ENCODE measurements at regions of chr1 and their contacts with region 1.

Region 1: GRCh38 chr1:54121482-54122134 is 31.2 kb downstream of the CDCP2 start:
- DNase-seq: peak; percentile 51 to 73
- ATAC-seq: peak; percentile 33 to 72
- H3K4me3 ChIP-seq: peak overlapping the region; percentile 35 to 49 (median 42)
- H3K27ac ChIP-seq: no peak overlapping the region
- H3K4me1 ChIP-seq: peaks cover 10 to 17% of the 10 kb centered on the region in 2 donors
- H3K27me3 ChIP-seq: no peaks in the 10 kb centered on the region
- CTCF ChIP-seq: peak; percentile 67 to 88 (median 79)
- POLR2A ChIP-seq: no peak

Region 2: DNA sequence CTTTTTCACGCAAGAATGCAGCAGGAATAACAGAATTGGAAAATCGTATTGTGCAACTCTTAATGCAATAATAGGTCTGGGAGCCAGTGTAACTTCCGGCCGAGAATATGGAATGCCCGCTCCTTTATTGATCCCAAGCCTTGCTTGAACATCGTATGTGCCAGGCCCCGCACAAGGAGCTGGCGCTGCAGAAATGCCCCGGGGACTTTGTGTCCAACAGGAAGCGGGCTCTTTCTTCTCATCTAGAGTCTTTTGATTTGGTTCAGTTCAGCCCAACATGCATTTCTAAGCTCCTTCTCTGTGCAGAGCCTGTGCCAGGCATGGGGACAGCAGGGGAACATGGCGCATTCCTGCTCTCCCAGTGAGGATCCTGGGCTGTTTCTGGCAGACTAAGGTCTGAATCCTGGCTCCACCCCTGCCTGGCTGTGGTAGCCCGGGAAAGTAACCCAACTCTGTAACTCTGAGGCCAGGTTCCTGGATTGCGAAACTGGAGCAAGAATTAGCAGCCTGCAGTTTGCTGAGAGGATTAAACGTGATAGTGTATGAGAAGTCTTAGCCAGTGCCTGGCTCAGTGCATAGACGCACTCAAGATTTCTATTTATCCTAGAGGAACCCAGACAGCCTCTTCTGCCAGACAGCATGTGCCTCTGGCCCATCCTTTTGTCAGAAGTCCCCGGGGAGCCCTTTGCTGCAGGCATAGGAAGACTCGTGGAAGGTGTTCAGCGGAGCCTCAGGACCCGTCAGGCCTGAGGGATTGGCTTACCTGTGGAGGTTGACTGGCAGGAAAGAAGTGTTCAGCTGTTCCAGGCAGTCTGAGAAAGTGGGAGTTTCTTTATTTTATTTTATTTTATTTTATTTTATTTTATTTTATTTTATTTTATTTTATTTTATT is 32.2 kb after region 1 on chr1:
- in situ Hi-C with region 1: no loop called
- intact Hi-C with region 1: loop called (anchors 1 kb)
- DNase-seq: peak; percentile 79 to 88
- ATAC-seq: peak; percentile 100
- H3K4me3 ChIP-seq: no peak overlapping the region
- H3K27ac ChIP-seq: peak overlapping the region; percentile 60 to 73 (median 65)
- H3K4me1 ChIP-seq: peaks cover 8 to 15% of the 10 kb centered on the region in 2 donors
- H3K27me3 ChIP-seq: no peaks in the 10 kb centered on the region
- CTCF ChIP-seq: no peak
- POLR2A ChIP-seq: no peak

Region 3: GRCh38 chr1:54199765-54200518 is 78.3 kb after region 1 on chr1 and contains the starts of genes CYB5RL and MRPL37:
- in situ Hi-C with region 1: no loop called
- intact Hi-C with region 1: loop called (anchors 1 kb)
- DNase-seq: peak; percentile 94 to 95
- ATAC-seq: peak; percentile 99
- H3K4me3 ChIP-seq: peak within 1 kb of the TSS; percentile 94 to 100 (median 97)
- H3K27ac ChIP-seq: peak within 1 kb of the TSS; percentile 93 to 97 (median 96)
- H3K4me1 ChIP-seq: peaks cover 18 to 22% of the 10 kb centered on the region in 2 donors
- H3K27me3 ChIP-seq: no peaks in the 10 kb centered on the region
- CTCF ChIP-seq: no peak
- POLR2A ChIP-seq: peak; percentile 65 to 78
- total RNA-seq, gene CYB5RL: 1.8 to 5.8 (median 3.4) TPM
- total RNA-seq, gene MRPL37: 91.6 to 141 (median 121) TPM

Region 4: GRCh38 chr1:54273092-54273794 is 151.6 kb after region 1 on chr1:
- in situ Hi-C with region 1: no loop called
- intact Hi-C with region 1: loop called (anchors 5 kb)
- DNase-seq: peak; percentile 84 to 91
- ATAC-seq: peak; percentile 82 to 84
- H3K4me3 ChIP-seq: peak overlapping the region; percentile 30 to 43 (median 36)
- H3K27ac ChIP-seq: peak overlapping the region; percentile 89 to 92 (median 92)
- H3K4me1 ChIP-seq: peaks cover 74 to 80% of the 10 kb centered on the region in 2 donors
- H3K27me3 ChIP-seq: no peaks in the 10 kb centered on the region
- CTCF ChIP-seq: peak; percentile 59 to 82 (median 67)
- POLR2A ChIP-seq: peak; percentile 21

Region 5: DNA sequence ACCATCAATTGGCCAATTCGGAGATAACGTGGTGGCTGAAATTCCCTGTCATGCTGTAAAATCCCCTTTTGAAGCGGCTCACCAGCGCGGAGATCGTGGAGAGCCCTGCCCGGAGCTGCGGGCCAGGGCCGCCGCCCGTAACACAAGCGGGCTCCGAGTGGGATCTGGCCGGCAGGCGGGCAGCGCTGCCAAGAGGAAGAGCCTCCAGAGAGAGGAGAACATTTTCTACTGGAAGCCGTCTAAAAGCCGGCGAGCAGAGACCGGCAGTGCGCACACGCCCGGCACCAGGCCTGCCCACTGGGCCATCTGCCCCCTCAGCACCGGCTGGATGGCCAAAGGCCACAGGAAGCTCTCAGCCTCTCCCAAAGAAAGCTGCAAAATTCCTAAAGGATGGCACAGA is 269.0 kb after region 1 on chr1:
- in situ Hi-C with region 1: no loop called
- intact Hi-C with region 1: no loop called
- DNase-seq: peak in 1 of 2 donors; percentile 63
- ATAC-seq: peak; percentile 46 to 59
- H3K4me3 ChIP-seq: peak overlapping the region; percentile 42 to 49 (median 45)
- H3K27ac ChIP-seq: peak overlapping the region; percentile 79 to 89 (median 84)
- H3K4me1 ChIP-seq: peaks cover 80 to 90% of the 10 kb centered on the region in 2 donors
- H3K27me3 ChIP-seq: no peaks in the 10 kb centered on the region
- CTCF ChIP-seq: no peak
- POLR2A ChIP-seq: no peak

Region 6: DNA sequence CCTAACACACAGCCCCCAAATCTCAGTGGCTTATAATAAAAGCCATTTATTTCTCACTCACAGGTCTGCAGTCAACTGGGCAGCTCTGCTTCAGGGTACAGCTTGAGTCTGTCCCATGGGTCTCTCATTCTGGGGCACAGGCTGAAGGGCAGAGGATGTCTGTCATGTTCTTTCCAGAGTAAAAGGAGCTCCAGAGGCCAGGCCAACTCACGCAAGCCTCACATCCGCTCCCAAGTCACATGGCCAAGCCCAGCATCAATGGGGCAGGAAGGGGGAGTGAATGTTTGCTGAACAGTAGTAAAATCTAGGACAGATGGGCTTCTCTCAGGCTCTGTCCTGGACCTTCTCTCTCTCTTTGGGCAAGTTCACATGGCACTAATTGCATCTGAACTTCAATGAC is 291.7 kb after region 1 on chr1:
- in situ Hi-C with region 1: loop called in 2 of 4 experiments (anchors 5 to 10 kb)
- intact Hi-C with region 1: loop called (anchors 2 kb)
- DNase-seq: no peak
- ATAC-seq: peak in 1 of 2 donors; percentile 34
- H3K4me3 ChIP-seq: no peak overlapping the region
- H3K27ac ChIP-seq: peak overlapping the region; percentile 18 to 64 (median 48)
- H3K4me1 ChIP-seq: peaks cover 5 to 10% of the 10 kb centered on the region in 2 donors
- H3K27me3 ChIP-seq: no peaks in the 10 kb centered on the region
- CTCF ChIP-seq: no peak
- POLR2A ChIP-seq: no peak

Region 7: DNA sequence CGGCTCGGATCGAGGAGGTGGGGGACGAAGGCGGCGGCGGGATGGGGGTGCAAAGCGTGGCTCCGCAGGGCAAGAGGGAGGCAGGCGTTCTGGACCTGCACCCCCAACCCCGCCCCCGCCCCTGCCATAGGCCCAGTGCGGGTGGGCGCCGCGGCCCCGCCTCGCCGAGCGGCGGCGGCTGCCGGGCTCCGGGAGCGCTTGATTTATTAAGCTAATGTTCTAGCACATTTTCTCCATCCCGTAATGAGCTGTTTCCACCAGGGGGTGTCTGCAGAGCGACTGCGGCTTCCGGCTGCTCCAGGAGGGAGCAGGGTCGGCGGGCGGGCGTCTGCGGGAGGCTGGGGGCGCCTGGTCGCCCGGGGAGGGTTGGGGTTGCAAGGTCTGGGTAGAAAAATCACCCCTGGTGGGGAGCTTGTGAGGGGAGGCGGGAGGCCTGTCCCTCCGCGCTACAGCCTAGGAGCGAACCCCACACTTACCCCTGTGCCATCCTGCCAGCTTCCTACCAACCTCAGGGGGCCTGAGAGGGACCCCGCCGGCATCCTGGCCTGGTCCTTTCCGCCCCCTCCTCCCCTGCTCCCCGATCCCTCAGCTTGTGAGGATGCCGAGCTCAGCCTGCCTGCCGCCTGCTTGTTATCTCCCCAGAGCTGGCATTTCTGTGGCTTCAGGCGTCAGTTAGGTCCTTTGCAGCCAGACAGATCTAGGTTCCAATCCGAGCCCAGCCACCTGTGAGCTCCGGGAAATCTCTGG is 377.9 kb after region 1 on chr1:
- in situ Hi-C with region 1: loop called in 1 of 4 experiments (anchors 10 kb)
- intact Hi-C with region 1: no loop called
- DNase-seq: no peak
- ATAC-seq: no peak
- H3K4me3 ChIP-seq: peak overlapping the region; percentile 33 to 60 (median 41)
- H3K27ac ChIP-seq: no peak overlapping the region
- H3K4me1 ChIP-seq: peaks cover 5 to 6% of the 10 kb centered on the region in 2 donors
- H3K27me3 ChIP-seq: peaks cover 0 to 21% (median 6%) of the 10 kb centered on the region in 3 donors
- CTCF ChIP-seq: peak in 2 of 5 experiments; percentile 29 to 31
- POLR2A ChIP-seq: no peak

Region 8: GRCh38 chr1:54810100-54810942 is 688.7 kb after region 1 on chr1:
- in situ Hi-C with region 1: loop called in 1 of 4 experiments (anchors 25 kb)
- intact Hi-C with region 1: loop called (anchors 1 kb)
- DNase-seq: no peak
- ATAC-seq: peak; percentile 79 to 81
- H3K4me3 ChIP-seq: no peak overlapping the region
- H3K27ac ChIP-seq: no peak overlapping the region
- H3K4me1 ChIP-seq: no peaks in the 10 kb centered on the region
- H3K27me3 ChIP-seq: no peaks in the 10 kb centered on the region
- CTCF ChIP-seq: peak; percentile 59 to 80 (median 73)
- POLR2A ChIP-seq: no peak

Measured in gastrocnemius medialis (tissue), 4 donors.